CD4-positive, alpha-beta T cell (primary cell): ENCODE measurements at regions of chr12 and their contacts with region 1.

Region 1: GRCh38 chr12:52307836-52308805 is 13.1 kb downstream of the KRT83 start:
- DNase-seq: peak in 7 of 14 experiments; percentile 7 to 36 (median 20)
- ATAC-seq: peak; percentile 68
- H3K4me3 ChIP-seq: no peak overlapping the region
- H3K4me3 Mint-ChIP-seq: peak overlapping the region; percentile 15
- H3K27ac ChIP-seq: no peak overlapping the region
- H3K27ac Mint-ChIP-seq: no peak overlapping the region
- H3K4me1 ChIP-seq: peaks cover 13% of the 10 kb centered on the region
- H3K4me1 Mint-ChIP-seq: peaks cover 11% of the 10 kb centered on the region
- H3K27me3 ChIP-seq: peaks cover 38 to 61% of the 10 kb centered on the region in 2 experiments
- H3K27me3 Mint-ChIP-seq: peaks cover 80% of the 10 kb centered on the region
- CTCF ChIP-seq: no peak

Region 2: GRCh38 chr12:52251367-52252055 is 56.6 kb before region 1 on chr12:
- CTCF ChIA-PET with region 1: no interaction called
- POLR2A ChIA-PET with region 1: no interaction called
- intact Hi-C with region 1: loop called in 1 of 2 experiments (anchors 2 kb)
- DNase-seq: peak in 1 of 14 experiments; percentile 21
- ATAC-seq: no peak
- H3K4me3 ChIP-seq: no peak overlapping the region
- H3K4me3 Mint-ChIP-seq: no peak overlapping the region
- H3K27ac ChIP-seq: no peak overlapping the region
- H3K27ac Mint-ChIP-seq: no peak overlapping the region
- H3K4me1 ChIP-seq: peaks cover 13% of the 10 kb centered on the region
- H3K4me1 Mint-ChIP-seq: peaks cover 6% of the 10 kb centered on the region
- H3K27me3 ChIP-seq: peaks cover 14 to 21% of the 10 kb centered on the region in 2 experiments
- H3K27me3 Mint-ChIP-seq: peaks cover 69% of the 10 kb centered on the region
- CTCF ChIP-seq: no peak

Region 3: DNA sequence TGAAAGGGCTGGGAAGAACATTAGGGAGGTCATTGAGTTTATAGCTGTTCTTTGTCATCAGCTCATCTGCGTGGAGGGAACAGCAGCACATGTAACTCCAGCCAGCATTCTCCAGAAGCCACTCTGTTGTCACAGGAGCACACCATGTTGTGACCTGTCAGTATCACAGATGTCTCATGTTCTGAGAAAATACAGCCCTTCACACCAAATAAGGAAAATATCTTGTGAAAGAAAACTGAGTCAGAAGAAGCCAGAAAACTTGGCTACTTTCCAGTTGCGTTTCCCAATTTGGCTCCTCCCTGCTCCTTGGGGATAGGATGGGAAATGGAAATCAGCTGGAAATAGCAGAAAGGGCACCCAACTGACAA is 108.2 kb after region 1 on chr12:
- CTCF ChIA-PET with region 1: no interaction called
- POLR2A ChIA-PET with region 1: no interaction called
- intact Hi-C with region 1: no loop called
- DNase-seq: no peak
- ATAC-seq: no peak
- H3K4me3 ChIP-seq: no peak overlapping the region
- H3K4me3 Mint-ChIP-seq: no peak overlapping the region
- H3K27ac ChIP-seq: no peak overlapping the region
- H3K27ac Mint-ChIP-seq: no peak overlapping the region
- H3K4me1 ChIP-seq: no peaks in the 10 kb centered on the region
- H3K4me1 Mint-ChIP-seq: no peaks in the 10 kb centered on the region
- H3K27me3 ChIP-seq: no peaks in the 10 kb centered on the region
- H3K27me3 Mint-ChIP-seq: peaks cover 16% of the 10 kb centered on the region
- CTCF ChIP-seq: no peak